ENCODE measurements at regions of chr11 and their contacts with region 1.

Region 1: DNA sequence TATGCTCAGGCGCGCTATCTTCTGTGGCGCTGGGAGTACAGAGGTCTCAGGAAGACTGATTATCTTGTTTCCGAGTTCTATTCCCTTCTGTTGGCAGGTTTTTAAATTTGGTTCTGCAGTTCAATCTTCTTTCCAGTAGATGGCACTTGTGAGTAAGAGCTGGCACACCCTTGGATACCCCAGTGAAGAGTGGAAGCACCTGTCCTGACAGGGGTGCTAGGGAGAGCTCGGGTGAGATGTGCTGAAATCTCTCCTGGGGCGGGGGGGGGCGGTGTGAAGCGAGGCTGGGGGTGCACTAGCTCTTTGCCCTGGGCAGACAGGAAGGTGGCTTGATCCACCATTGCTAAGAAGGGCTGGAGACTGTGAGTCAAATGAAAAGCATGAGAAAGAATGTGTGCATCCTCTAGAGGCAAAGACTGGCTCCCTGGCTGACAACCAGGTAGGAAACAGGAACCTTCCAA is 679.9 kb upstream of the CCDC179 start:
- ATAC-seq: peak; percentile 64 to 90 (median 74)
- H3K4me3 ChIP-seq: no peak overlapping the region
- H3K27ac ChIP-seq: no peak overlapping the region
- H3K4me1 ChIP-seq: peaks cover 2 to 4% of the 10 kb centered on the region in 2 donors

Region 2: GRCh38 chr11:23112987-23113886 is 426.9 kb before region 1 on chr11:
- in situ Hi-C with region 1: loop called in 1 of 9 experiments (anchors 25 kb)
- ATAC-seq: peak in 6 of 8 experiments; percentile 37 to 66 (median 42)
- H3K4me3 ChIP-seq: no peak overlapping the region
- H3K27ac ChIP-seq: no peak overlapping the region
- H3K4me1 ChIP-seq: peaks cover 2 to 18% of the 10 kb centered on the region in 2 donors

Region 3: DNA sequence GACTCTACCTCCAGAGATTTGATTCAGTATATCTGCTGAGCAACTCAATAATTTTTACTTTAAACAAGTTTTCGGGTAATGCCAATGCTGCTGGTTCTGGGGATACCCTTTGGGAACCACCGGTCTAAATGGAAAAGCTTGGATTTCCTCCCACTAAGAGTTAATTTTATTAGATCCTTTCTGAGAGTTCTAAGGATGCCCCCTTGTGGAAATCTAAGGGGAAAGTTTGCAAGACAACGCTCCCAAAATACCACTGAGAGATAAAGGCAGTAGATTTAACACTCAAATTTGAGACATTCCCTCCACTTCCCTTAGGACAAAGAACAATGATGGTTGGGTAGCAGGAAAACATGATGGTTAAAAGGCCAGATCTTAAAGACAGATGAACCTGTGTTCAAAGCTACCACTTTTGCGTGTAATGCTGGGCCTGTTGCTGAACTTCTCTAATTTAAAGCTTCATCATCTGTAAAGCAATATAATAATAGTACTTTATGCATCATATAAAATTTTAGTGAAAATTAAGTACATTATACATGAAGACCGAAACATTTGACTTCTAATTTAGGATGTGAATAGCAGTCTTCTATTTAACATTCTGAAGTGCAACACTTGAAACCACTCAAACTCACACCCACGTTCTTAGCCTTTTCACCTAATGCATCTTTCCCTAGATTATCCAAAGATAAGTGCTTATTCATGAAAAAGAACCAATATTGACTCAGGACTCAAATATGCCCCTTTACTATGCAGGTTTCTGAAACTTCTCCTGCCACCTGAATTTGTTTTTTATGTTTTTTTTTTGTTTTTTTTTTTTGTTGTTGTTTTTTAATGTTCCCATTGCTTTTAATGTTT is 846.6 kb after region 1 on chr11:
- in situ Hi-C with region 1: loop called in 1 of 9 experiments (anchors 25 kb)
- ATAC-seq: no peak
- H3K4me3 ChIP-seq: no peak overlapping the region
- H3K27ac ChIP-seq: no peak overlapping the region
- H3K4me1 ChIP-seq: no peaks in the 10 kb centered on the region